Prostate gland (tissue), 2 donors: ENCODE measurements at regions of chr16 and their contacts with region 1.

Region 1: GRCh38 chr16:55711959-55712876 is 56.4 kb downstream of the SLC6A2 start:
- DNase-seq: peak; percentile 59
- H3K4me3 ChIP-seq: no peak overlapping the region
- H3K27ac ChIP-seq: no peak overlapping the region
- H3K4me1 ChIP-seq: no peaks in the 10 kb centered on the region
- H3K27me3 ChIP-seq: no peaks in the 10 kb centered on the region
- CTCF ChIP-seq: peak; percentile 41 to 68 (median 62)
- POLR2A ChIP-seq: no peak

Region 2: GRCh38 chr16:55842369-55843104 is 130.3 kb after region 1 on chr16:
- intact Hi-C with region 1: loop called (anchors 2 kb)
- DNase-seq: peak; percentile 22
- H3K4me3 ChIP-seq: no peak overlapping the region
- H3K27ac ChIP-seq: no peak overlapping the region
- H3K4me1 ChIP-seq: no peaks in the 10 kb centered on the region
- H3K27me3 ChIP-seq: no peaks in the 10 kb centered on the region
- CTCF ChIP-seq: peak; percentile 30 to 78 (median 72)
- POLR2A ChIP-seq: no peak

Region 3: DNA sequence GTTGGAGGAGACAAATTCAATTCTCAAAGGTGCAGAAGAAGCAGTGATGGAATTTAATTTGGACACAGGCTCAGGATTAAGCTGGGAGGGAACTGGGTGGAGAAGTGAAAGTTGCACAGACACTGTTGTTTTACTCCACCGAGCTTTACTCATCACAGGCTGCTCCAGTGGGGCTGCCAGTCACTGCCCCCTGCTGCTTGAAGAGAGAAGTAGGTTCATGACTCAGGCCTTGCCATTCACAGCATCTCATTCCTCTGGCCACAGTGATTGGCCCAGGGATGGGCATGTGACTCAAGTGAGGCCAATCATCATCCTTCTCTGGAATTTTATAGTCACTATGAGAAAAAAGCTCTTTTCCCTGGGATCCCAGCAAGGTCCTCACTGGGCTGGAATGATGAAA is 490.8 kb after region 1 on chr16:
- intact Hi-C with region 1: loop called (anchors 10 kb)
- DNase-seq: no peak
- H3K4me3 ChIP-seq: no peak overlapping the region
- H3K27ac ChIP-seq: no peak overlapping the region
- H3K4me1 ChIP-seq: no peaks in the 10 kb centered on the region
- H3K27me3 ChIP-seq: no peaks in the 10 kb centered on the region
- CTCF ChIP-seq: no peak
- POLR2A ChIP-seq: no peak